ENCODE measurements at regions of chr5 and their contacts with region 1.

Region 1: GRCh38 chr5:147558826-147559225 is 49.0 kb upstream of the DPYSL3 start:
- DNase-seq: peak; percentile 69 to 84 (median 71)
- ATAC-seq: peak; percentile 86 to 87
- H3K4me3 ChIP-seq: no peak overlapping the region
- H3K27ac ChIP-seq: no peak overlapping the region
- H3K4me1 ChIP-seq: peaks cover 1% of the 10 kb centered on the region
- H3K27me3 ChIP-seq: no peaks in the 10 kb centered on the region

Region 2: DNA sequence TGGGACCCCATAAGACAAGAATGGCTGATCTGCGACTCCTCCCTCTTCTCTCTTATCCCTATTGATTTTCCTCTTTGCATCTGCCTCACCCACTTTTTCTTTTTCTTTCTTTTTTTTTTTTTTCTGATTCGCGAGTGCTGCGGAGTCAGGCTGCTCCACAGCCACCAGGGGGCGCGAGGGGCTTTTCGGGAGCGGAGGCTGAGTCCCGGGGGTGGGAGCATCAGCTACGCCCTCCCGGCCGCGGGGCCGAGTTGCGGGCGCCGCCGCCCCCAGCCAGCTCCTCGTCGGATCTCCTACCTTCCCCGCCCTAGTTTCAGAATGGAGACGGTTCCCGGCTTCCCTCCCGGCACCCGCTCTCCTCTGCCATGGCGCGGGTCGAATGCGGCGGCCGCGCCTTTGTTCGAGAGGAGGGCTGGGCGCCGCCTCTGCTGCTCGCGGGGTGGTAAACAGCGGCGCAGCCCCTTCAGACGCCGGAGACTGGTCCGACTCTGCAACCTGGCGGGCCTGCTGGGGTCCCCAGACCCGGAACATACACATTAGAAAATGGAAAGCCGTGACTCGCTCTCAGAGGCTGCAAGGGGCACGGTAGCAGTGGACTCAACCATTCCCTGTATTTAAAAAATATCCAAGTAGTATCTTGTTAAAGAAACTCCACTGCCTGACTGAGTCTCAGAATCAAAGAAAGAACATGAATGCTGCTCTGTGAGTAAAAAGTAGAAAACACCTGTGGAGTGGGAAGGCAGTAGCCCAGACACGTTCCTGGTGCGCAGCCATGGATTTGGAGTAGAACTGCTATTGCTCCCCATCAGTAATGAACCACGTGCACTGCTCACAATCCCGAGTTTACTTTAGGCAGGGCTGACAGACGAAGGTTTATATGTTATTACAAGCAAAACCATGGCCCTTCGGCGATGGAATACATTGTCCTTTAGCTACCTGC is 104.7 kb before region 1 on chr5:
- intact Hi-C with region 1: loop called (anchors 1 to 5 kb)
- DNase-seq: peak; percentile 91 to 97 (median 97)
- ATAC-seq: peak; percentile 93 to 94
- H3K4me3 ChIP-seq: peak overlapping the region; percentile 65
- H3K27ac ChIP-seq: peak overlapping the region; percentile 81
- H3K4me1 ChIP-seq: no peaks in the 10 kb centered on the region
- H3K27me3 ChIP-seq: no peaks in the 10 kb centered on the region

Region 3: GRCh38 chr5:148042881-148043280 is 484.1 kb after region 1 on chr5:
- intact Hi-C with region 1: no loop called
- DNase-seq: no peak
- ATAC-seq: no peak
- H3K4me3 ChIP-seq: no peak overlapping the region
- H3K27ac ChIP-seq: no peak overlapping the region
- H3K4me1 ChIP-seq: no peaks in the 10 kb centered on the region
- H3K27me3 ChIP-seq: no peaks in the 10 kb centered on the region

Measured in right cardiac atrium (tissue), 5 donors.